ENCODE measurements at regions of chr2 and their contacts with region 1.

Region 1: GRCh38 chr2:69724540-69725159 is 17.3 kb upstream of the ANXA4 start:
- DNase-seq: peak; percentile 51
- H3K4me3 ChIP-seq: peak overlapping the region; percentile 40
- H3K27ac ChIP-seq: no peak overlapping the region
- H3K27me3 ChIP-seq: no peaks in the 10 kb centered on the region
- CTCF ChIP-seq: peak; percentile 88

Region 2: GRCh38 chr2:69755862-69756467 is 31.3 kb after region 1 on chr2:
- CTCF ChIA-PET with region 1: interaction called, 10 read pairs
- POLR2A ChIA-PET with region 1: no interaction called
- DNase-seq: no peak
- H3K4me3 ChIP-seq: no peak overlapping the region
- H3K27ac ChIP-seq: no peak overlapping the region
- H3K27me3 ChIP-seq: no peaks in the 10 kb centered on the region
- CTCF ChIP-seq: no peak

Region 3: GRCh38 chr2:69789175-69789721 is 64.6 kb after region 1 on chr2:
- CTCF ChIA-PET with region 1: interaction called, 28 read pairs
- POLR2A ChIA-PET with region 1: no interaction called
- DNase-seq: peak; percentile 62
- H3K4me3 ChIP-seq: no peak overlapping the region
- H3K27ac ChIP-seq: peak overlapping the region; percentile 47
- H3K27me3 ChIP-seq: no peaks in the 10 kb centered on the region
- CTCF ChIP-seq: no peak

Region 4: DNA sequence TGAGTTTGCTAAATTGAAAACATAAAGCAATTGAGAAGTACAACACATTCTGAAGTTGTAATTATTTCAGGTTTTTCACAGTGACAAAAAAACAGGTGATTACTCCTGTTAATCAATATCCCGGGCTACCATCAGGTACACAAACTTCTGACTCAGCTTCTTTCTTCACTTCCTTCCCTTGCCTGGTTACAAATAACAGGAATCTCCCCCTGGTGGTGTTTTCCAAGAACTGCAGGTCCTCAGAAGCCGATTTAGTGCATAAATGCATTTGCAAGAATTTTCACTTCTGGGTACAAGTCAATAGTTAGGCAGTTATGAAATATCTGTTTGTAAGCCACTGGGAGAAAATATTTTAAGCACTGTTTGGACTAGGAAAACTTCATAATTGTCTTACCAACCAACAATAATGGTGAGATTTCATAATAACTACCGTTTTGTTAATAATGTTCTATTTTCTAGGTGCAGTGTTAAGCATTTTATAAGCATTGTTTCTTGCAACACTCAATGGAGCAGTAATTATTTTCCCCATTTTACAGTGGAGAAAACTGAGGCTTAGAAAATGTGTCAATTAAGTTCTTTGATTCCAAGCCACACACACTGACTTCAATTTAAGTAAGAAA is 92.4 kb after region 1 on chr2:
- CTCF ChIA-PET with region 1: interaction called, 765 read pairs
- POLR2A ChIA-PET with region 1: interaction called, 3 read pairs
- DNase-seq: peak; percentile 76
- H3K4me3 ChIP-seq: no peak overlapping the region
- H3K27ac ChIP-seq: no peak overlapping the region
- H3K27me3 ChIP-seq: no peaks in the 10 kb centered on the region
- CTCF ChIP-seq: peak; percentile 90

Region 5: DNA sequence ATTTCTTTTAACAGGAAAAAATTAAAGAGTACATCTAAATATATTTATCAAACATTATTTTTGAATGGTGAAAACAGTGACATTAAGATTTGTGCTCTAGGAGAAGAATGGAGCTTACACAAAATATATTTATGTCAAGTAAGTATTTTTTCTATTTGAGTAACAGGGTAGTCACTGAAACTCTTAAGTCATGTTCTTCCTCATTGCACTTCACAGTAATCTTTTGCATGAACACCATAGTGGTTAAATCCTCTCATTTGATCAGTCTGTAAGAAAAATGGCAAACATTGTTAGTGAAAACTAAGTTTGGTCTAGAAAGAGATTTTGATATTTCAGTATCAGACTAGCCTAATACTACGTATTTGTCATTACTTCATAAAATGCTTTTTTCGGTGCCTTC is 112.9 kb after region 1 on chr2:
- CTCF ChIA-PET with region 1: interaction called, 10 read pairs
- POLR2A ChIA-PET with region 1: no interaction called
- DNase-seq: no peak
- H3K4me3 ChIP-seq: no peak overlapping the region
- H3K27ac ChIP-seq: no peak overlapping the region
- H3K27me3 ChIP-seq: no peaks in the 10 kb centered on the region
- CTCF ChIP-seq: no peak

Region 6: GRCh38 chr2:69893684-69894551 is 169.3 kb after region 1 on chr2 and contains the start of gene SNRNP27:
- CTCF ChIA-PET with region 1: interaction called, 25 read pairs
- POLR2A ChIA-PET with region 1: no interaction called
- DNase-seq: peak; percentile 53
- H3K4me3 ChIP-seq: peak within 1 kb of the TSS; percentile 81
- H3K27ac ChIP-seq: peak within 1 kb of the TSS; percentile 84
- H3K27me3 ChIP-seq: peaks cover 4% of the 10 kb centered on the region
- CTCF ChIP-seq: no peak
- polyA plus RNA-seq, gene SNRNP27: 38.1 and 57.8 TPM in 2 replicates